PC-9 (cell line): ENCODE measurements at regions of chrX and their contacts with region 1.

Region 1: GRCh38 chrX:77719388-77719787 is 66.6 kb downstream of the ATRX start:
- DNase-seq: no peak
- H3K4me3 ChIP-seq: no peak overlapping the region
- H3K27ac ChIP-seq: no peak overlapping the region
- H3K4me1 ChIP-seq: no peaks in the 10 kb centered on the region
- H3K27me3 ChIP-seq: no peaks in the 10 kb centered on the region
- CTCF ChIP-seq: no peak

Region 2: DNA sequence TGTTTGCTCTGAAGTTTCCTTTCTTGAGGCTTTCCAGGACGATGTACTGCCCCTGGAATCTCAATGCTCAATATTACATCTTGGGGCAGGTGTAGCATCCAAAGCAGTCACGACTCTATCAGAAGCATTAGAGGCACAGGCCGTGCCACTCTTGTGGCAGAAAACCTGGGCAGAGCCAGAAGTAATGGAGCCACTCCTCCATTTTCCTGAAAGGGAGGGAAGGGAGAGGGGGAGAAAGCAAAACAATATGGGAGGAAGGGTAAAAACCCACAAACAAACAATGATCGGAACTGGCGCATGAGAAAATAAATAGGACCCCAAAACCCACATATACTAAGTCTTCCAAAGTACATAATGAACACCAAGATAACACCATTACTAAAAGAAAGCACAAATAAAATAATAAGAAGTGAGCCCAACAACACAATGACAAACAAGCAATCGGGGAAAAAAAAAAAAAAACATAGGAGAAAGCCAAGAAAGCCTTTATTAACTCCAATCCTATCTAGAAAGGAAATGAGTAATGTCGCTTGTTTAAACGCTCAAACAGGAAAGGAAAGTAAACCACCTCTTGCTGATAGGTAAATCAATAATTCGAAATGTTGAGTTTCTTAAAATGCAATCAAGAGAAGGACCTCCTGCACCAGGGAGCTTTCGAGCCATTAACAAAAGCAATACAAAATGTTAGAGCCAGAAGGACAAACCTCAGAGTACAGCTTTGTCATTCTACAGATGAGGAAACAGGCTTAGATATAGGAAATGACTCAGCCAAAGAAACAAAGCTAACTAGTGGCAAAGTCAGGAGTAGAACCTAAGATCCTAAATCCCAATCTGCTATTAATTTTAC is 50.8 kb before region 1 on chrX:
- CTCF ChIA-PET with region 1: no interaction called
- POLR2A ChIA-PET with region 1: no interaction called
- intact Hi-C with region 1: no loop called
- DNase-seq: no peak
- H3K4me3 ChIP-seq: no peak overlapping the region
- H3K27ac ChIP-seq: peak overlapping the region; percentile 30; the same call in 1 of the 2 replicates
- H3K4me1 ChIP-seq: no peaks in the 10 kb centered on the region
- H3K27me3 ChIP-seq: no peaks in the 10 kb centered on the region
- CTCF ChIP-seq: no peak

Region 3: GRCh38 chrX:77733342-77733741 is 14.0 kb after region 1 on chrX:
- CTCF ChIA-PET with region 1: no interaction called
- POLR2A ChIA-PET with region 1: interaction called, 36 read pairs
- intact Hi-C with region 1: no loop called
- DNase-seq: no peak
- H3K4me3 ChIP-seq: no peak overlapping the region
- H3K27ac ChIP-seq: no peak overlapping the region
- H3K4me1 ChIP-seq: no peaks in the 10 kb centered on the region
- H3K27me3 ChIP-seq: no peaks in the 10 kb centered on the region
- CTCF ChIP-seq: no peak